ENCODE measurements at regions of chr7 and their contacts with region 1.

Region 1: GRCh38 chr7:107168233-107169119 is at the start of gene HBP1:
- DNase-seq: peak; percentile 92 to 100 (median 98)
- ATAC-seq: peak; percentile 84 to 88 (median 86)
- H3K4me3 ChIP-seq: peak within 1 kb of the TSS; percentile 90 to 92
- H3K4me3 Mint-ChIP-seq: peak within 1 kb of the TSS; percentile 93 to 98 (median 94)
- H3K27ac ChIP-seq: peak within 1 kb of the TSS; percentile 96
- H3K27ac Mint-ChIP-seq: peak within 1 kb of the TSS; percentile 99 to 100
- H3K4me1 ChIP-seq: peaks cover 18 to 25% of the 10 kb centered on the region in 2 experiments
- H3K4me1 Mint-ChIP-seq: peaks cover 29 to 44% (median 37%) of the 10 kb centered on the region in 3 donors
- H3K27me3 ChIP-seq: no peaks in the 10 kb centered on the region
- H3K27me3 Mint-ChIP-seq: peaks cover 2 to 5% of the 10 kb centered on the region in 2 donors
- total RNA-seq, gene HBP1: 78.6 to 211 (median 92.0) TPM

Region 2: DNA sequence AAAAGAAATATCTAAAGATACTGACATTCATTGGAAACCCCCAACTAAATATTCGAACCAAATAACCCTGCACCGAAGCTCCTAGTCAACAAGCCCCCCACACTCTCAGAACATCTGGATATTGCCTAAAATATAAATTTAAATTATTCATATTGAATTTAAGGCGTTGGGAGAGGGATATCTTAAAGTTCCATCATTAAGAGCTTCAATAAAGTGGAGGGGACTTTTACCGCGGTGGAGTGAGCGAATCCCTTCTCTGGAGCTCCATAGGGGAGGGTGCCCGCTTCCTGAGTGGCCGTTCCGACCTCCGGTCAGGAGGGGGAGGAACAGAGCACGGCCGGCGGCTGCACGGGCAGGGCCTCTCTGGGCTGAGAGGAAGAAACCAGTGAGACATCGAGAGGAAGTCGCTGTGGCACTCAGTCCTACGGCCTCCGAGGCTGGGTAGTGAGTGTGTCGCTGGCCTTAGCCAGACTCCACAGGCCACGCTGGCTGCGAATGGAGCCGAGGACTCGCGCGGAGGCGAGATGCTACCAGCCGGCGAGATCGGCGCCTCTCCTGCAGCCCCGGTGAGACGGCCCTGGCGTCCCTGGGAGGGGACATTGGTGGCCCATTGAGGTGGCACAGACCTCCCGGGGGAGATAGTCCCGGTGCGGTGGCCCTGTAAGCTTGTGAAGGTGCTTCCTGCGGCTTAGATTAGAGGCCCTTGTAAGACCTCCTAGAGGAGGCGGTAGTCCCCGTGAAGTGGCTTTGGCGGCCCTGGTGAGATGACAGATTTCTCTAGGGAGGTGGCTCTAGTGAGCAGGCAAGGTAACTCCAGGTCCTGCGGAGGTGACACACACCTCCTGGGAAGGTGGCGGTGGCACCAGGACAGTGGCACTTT is 1636.4 kb before region 1 on chr7 and contains the start of gene RINT1:
- CTCF ChIA-PET with region 1: interaction called in 1 of 2 experiments, 3 read pairs
- POLR2A ChIA-PET with region 1: interaction called in 1 of 2 experiments, 11 read pairs
- DNase-seq: peak; percentile 77 to 94 (median 83)
- ATAC-seq: peak; percentile 90 to 98 (median 98)
- H3K4me3 ChIP-seq: peak within 1 kb of the TSS; percentile 78 to 83
- H3K4me3 Mint-ChIP-seq: peak within 1 kb of the TSS; percentile 88 to 94 (median 90)
- H3K27ac ChIP-seq: peak within 1 kb of the TSS; percentile 92
- H3K27ac Mint-ChIP-seq: peak within 1 kb of the TSS; percentile 93 to 98
- H3K4me1 ChIP-seq: peaks cover 15 to 32% of the 10 kb centered on the region in 2 experiments
- H3K4me1 Mint-ChIP-seq: peaks cover 30 to 49% (median 38%) of the 10 kb centered on the region in 3 donors
- H3K27me3 ChIP-seq: no peaks in the 10 kb centered on the region
- H3K27me3 Mint-ChIP-seq: no peaks in the 10 kb centered on the region
- total RNA-seq, gene RINT1: 22.5 to 30.4 (median 25.2) TPM

Region 3: GRCh38 chr7:106485031-106485551 is 683.4 kb before region 1 on chr7:
- CTCF ChIA-PET with region 1: no interaction called
- POLR2A ChIA-PET with region 1: interaction called in 1 of 2 experiments, 10 read pairs
- DNase-seq: no peak
- ATAC-seq: no peak
- H3K4me3 ChIP-seq: no peak overlapping the region
- H3K4me3 Mint-ChIP-seq: no peak overlapping the region
- H3K27ac ChIP-seq: no peak overlapping the region
- H3K27ac Mint-ChIP-seq: no peak overlapping the region
- H3K4me1 ChIP-seq: no peaks in the 10 kb centered on the region
- H3K4me1 Mint-ChIP-seq: no peaks in the 10 kb centered on the region
- H3K27me3 ChIP-seq: peaks cover 0 to 3% of the 10 kb centered on the region in 2 experiments
- H3K27me3 Mint-ChIP-seq: peaks cover 20 to 26% of the 10 kb centered on the region in 2 donors

Region 4: GRCh38 chr7:107150375-107151073 is 18.0 kb before region 1 on chr7:
- CTCF ChIA-PET with region 1: interaction called, 5 to 101 read pairs
- POLR2A ChIA-PET with region 1: interaction called in 1 of 2 experiments, 10 read pairs
- DNase-seq: peak; percentile 43 to 90 (median 74)
- ATAC-seq: peak; percentile 71 to 85 (median 73)
- H3K4me3 ChIP-seq: no peak overlapping the region
- H3K4me3 Mint-ChIP-seq: no peak overlapping the region
- H3K27ac ChIP-seq: no peak overlapping the region
- H3K27ac Mint-ChIP-seq: no peak overlapping the region
- H3K4me1 ChIP-seq: no peaks in the 10 kb centered on the region
- H3K4me1 Mint-ChIP-seq: peaks cover 0 to 7% (median 5%) of the 10 kb centered on the region in 3 donors
- H3K27me3 ChIP-seq: no peaks in the 10 kb centered on the region
- H3K27me3 Mint-ChIP-seq: no peaks in the 10 kb centered on the region

Region 5: GRCh38 chr7:107186242-107186641 is 17.8 kb after region 1 on chr7:
- CTCF ChIA-PET with region 1: interaction called in 1 of 2 experiments, 21 read pairs
- POLR2A ChIA-PET with region 1: interaction called, 13 to 76 read pairs
- DNase-seq: no peak
- ATAC-seq: no peak
- H3K4me3 ChIP-seq: no peak overlapping the region
- H3K4me3 Mint-ChIP-seq: no peak overlapping the region
- H3K27ac ChIP-seq: no peak overlapping the region
- H3K27ac Mint-ChIP-seq: no peak overlapping the region
- H3K4me1 ChIP-seq: no peaks in the 10 kb centered on the region
- H3K4me1 Mint-ChIP-seq: peaks cover 24 to 37% (median 29%) of the 10 kb centered on the region in 3 donors
- H3K27me3 ChIP-seq: no peaks in the 10 kb centered on the region
- H3K27me3 Mint-ChIP-seq: no peaks in the 10 kb centered on the region

Region 6: DNA sequence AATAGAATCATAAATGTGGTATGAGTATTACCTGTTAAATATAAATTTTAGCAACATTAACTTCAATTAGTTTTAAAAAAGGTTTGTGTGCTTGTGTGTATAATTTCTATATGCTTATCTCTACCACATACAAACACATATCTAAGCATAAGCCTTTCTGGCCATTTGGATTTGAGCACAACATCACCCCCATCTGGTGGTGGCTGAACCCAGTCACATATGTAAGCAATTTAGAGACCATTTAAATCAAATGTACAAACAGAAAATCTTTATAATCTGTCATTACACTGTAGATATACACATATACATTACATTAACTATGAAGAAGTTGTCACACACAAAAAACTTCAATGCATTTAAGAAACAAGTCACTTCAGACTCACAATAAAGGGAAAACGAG is 333.1 kb after region 1 on chr7:
- CTCF ChIA-PET with region 1: no interaction called
- POLR2A ChIA-PET with region 1: no interaction called
- DNase-seq: peak in 11 of 35 experiments; percentile 2 to 40 (median 9)
- ATAC-seq: peak in 1 of 4 experiments; percentile 48
- H3K4me3 ChIP-seq: no peak overlapping the region
- H3K4me3 Mint-ChIP-seq: no peak overlapping the region
- H3K27ac ChIP-seq: no peak overlapping the region
- H3K27ac Mint-ChIP-seq: no peak overlapping the region
- H3K4me1 ChIP-seq: peaks cover 0 to 4% of the 10 kb centered on the region in 2 experiments
- H3K4me1 Mint-ChIP-seq: peaks cover 22 to 49% (median 36%) of the 10 kb centered on the region in 3 donors
- H3K27me3 ChIP-seq: no peaks in the 10 kb centered on the region
- H3K27me3 Mint-ChIP-seq: no peaks in the 10 kb centered on the region

Region 7: DNA sequence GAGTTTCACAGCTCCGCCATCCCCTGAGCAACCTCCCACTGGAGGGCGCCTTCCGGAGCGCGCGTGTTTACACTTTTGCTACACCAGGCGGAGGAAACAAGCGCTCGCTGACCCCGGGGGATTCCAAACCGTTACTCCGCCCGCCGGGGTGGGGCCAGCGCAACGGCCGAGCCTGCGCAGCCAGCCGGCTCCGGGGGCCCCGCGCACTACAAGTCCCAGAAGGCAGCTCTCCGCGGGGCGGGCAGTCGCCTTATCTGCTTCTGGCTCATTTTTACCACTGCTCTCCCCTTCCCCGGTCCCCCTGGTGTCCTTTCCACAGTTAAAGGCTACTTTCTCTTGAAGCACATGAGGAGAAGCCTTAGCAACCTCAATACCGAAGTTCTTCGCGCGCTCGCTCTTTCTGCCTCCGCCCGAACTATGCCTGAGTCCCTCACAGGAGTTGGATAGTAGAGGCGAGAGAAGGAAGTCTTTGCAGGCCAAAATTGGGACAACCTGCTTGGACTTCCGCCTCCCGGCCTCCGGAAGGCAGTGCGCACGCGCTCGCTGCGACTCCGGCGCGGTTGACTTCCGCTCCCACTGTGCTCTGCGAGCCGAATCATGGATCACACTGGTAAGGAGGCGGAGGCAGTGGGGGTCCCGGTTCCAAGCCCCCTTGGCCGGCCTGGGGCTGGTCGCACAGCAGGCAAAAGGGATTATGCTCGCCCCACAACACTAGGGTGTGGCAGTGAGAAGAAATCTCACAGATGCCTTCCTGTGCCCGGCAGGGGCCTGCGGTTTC is 575.3 kb after region 1 on chr7 and contains the start of gene CBLL1:
- CTCF ChIA-PET with region 1: interaction called in 1 of 2 experiments, 6 read pairs
- POLR2A ChIA-PET with region 1: interaction called, 5 to 17 read pairs
- DNase-seq: peak; percentile 95 to 99 (median 97)
- ATAC-seq: peak; percentile 92 to 96 (median 92)
- H3K4me3 ChIP-seq: peak within 1 kb of the TSS; percentile 78 to 99
- H3K4me3 Mint-ChIP-seq: peak within 1 kb of the TSS; percentile 94 to 97 (median 96)
- H3K27ac ChIP-seq: peak within 1 kb of the TSS; percentile 100
- H3K27ac Mint-ChIP-seq: peak within 1 kb of the TSS; percentile 100
- H3K4me1 ChIP-seq: peaks cover 22 to 37% of the 10 kb centered on the region in 2 experiments
- H3K4me1 Mint-ChIP-seq: peaks cover 52 to 55% (median 55%) of the 10 kb centered on the region in 3 donors
- H3K27me3 ChIP-seq: no peaks in the 10 kb centered on the region
- H3K27me3 Mint-ChIP-seq: no peaks in the 10 kb centered on the region
- total RNA-seq, gene CBLL1: 50.5 to 70.1 (median 61.6) TPM

Region 8: DNA sequence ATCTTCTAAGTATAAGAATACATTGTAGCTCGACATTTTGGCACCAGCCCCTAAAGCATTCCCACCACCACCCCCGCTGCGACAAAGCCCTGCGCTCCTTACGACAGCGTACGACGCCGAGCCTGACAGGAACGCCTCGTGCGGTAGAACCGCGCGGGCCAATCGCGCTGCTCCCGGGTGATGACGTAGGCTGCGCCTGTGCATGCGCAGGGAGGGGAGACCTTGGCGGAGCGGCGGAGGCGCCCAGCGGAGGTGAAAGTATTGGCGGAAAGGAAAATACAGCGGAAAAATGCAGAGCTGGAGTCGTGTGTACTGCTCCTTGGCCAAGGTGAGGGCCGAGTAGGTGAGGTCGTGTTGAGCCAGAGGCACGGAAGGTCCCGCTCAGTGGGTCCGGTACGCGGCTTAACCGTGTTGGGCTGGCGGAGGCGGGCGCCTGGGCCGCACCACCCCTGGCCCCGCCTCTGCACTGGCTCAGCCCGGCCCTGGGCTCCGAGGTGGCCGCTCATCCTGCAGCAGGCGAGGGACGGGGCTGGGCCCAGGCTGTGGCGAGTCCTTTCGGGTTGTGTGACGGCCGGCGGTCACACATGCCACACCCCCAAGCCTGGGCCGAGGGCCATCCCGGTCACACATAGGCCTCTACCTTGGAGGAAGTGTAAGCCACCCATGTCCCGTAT is 722.6 kb after region 1 on chr7 and contains the start of gene DLD:
- CTCF ChIA-PET with region 1: no interaction called
- POLR2A ChIA-PET with region 1: interaction called in 1 of 2 experiments, 11 read pairs
- DNase-seq: peak; percentile 84 to 97 (median 93)
- ATAC-seq: peak; percentile 97 to 99 (median 99)
- H3K4me3 ChIP-seq: peak within 1 kb of the TSS; percentile 77 to 90
- H3K4me3 Mint-ChIP-seq: peak within 1 kb of the TSS; percentile 96 to 98 (median 98)
- H3K27ac ChIP-seq: peak within 1 kb of the TSS; percentile 95
- H3K27ac Mint-ChIP-seq: peak within 1 kb of the TSS; percentile 94 to 98
- H3K4me1 ChIP-seq: peaks cover 18 to 24% of the 10 kb centered on the region in 2 experiments
- H3K4me1 Mint-ChIP-seq: peaks cover 49 to 52% (median 49%) of the 10 kb centered on the region in 3 donors
- H3K27me3 ChIP-seq: no peaks in the 10 kb centered on the region
- H3K27me3 Mint-ChIP-seq: no peaks in the 10 kb centered on the region
- total RNA-seq, gene DLD: 32.3 to 63.6 (median 41.9) TPM

Measured in T-cell (primary cell).